ENCODE measurements at regions of chr22 and their contacts with region 1.

Region 1: GRCh38 chr22:42090596-42091454 is at the start of gene NDUFA6:
- DNase-seq: peak; percentile 98
- H3K4me3 ChIP-seq: peak within 1 kb of the TSS; percentile 98
- H3K27ac ChIP-seq: peak within 1 kb of the TSS; percentile 59
- H3K4me1 ChIP-seq: peaks cover 16% of the 10 kb centered on the region; the same call in 1 of the 2 replicates
- H3K27me3 ChIP-seq: no peaks in the 10 kb centered on the region
- CTCF ChIP-seq: peak; percentile 92
- total RNA-seq, gene NDUFA6: 71.5 and 84.9 TPM in 2 replicates

Region 2: GRCh38 chr22:41998361-41999275 is 92.2 kb before region 1 on chr22 and contains the start of gene WBP2NL:
- CTCF ChIA-PET with region 1: no interaction called
- POLR2A ChIA-PET with region 1: interaction called, 31 read pairs
- intact Hi-C with region 1: no loop called
- DNase-seq: peak; percentile 72 to 89
- H3K4me3 ChIP-seq: peak within 1 kb of the TSS; percentile 76
- H3K27ac ChIP-seq: no peak within 1 kb of the TSS
- H3K4me1 ChIP-seq: peaks cover 16% of the 10 kb centered on the region
- H3K27me3 ChIP-seq: peaks cover 3% of the 10 kb centered on the region; the same call in 1 of the 2 replicates
- CTCF ChIP-seq: no peak
- total RNA-seq, gene WBP2NL: 7.1 and 12.2 TPM in 2 replicates

Region 3: DNA sequence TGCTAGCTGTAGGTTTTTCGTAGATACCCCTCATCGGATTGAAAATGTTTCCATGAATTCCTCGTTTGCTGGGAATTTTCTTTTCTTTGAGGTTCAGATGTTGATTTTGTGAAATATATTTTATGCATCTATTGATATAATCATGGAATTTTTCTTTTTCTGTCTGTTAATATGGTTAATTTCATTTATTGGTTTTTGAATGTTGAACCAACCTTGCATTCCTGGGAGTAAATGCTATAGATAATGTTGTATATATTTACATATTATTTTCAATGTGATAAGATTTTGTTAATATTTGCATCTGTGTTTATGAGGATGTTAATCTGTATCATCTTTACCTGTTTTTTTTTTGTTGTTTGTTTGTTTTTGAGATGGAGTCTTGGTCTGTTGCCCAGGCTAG is 10.4 kb after region 1 on chr22:
- CTCF ChIA-PET with region 1: interaction called, 28 read pairs
- POLR2A ChIA-PET with region 1: interaction called, 8 read pairs
- intact Hi-C with region 1: no loop called
- DNase-seq: no peak
- H3K4me3 ChIP-seq: no peak overlapping the region
- H3K27ac ChIP-seq: no peak overlapping the region
- H3K4me1 ChIP-seq: no peaks in the 10 kb centered on the region
- H3K27me3 ChIP-seq: no peaks in the 10 kb centered on the region
- CTCF ChIP-seq: no peak

Region 4: GRCh38 chr22:42160830-42161696 is 70.2 kb after region 1 on chr22:
- CTCF ChIA-PET with region 1: no interaction called
- POLR2A ChIA-PET with region 1: no interaction called
- intact Hi-C with region 1: loop called (anchors 2 kb)
- DNase-seq: no peak
- H3K4me3 ChIP-seq: no peak overlapping the region
- H3K27ac ChIP-seq: no peak overlapping the region
- H3K4me1 ChIP-seq: no peaks in the 10 kb centered on the region
- H3K27me3 ChIP-seq: no peaks in the 10 kb centered on the region
- CTCF ChIP-seq: no peak

Region 5: GRCh38 chr22:42256220-42256619 is 165.4 kb after region 1 on chr22:
- CTCF ChIA-PET with region 1: no interaction called
- POLR2A ChIA-PET with region 1: no interaction called
- intact Hi-C with region 1: no loop called
- DNase-seq: no peak
- H3K4me3 ChIP-seq: no peak overlapping the region
- H3K27ac ChIP-seq: no peak overlapping the region
- H3K4me1 ChIP-seq: no peaks in the 10 kb centered on the region
- H3K27me3 ChIP-seq: no peaks in the 10 kb centered on the region
- CTCF ChIP-seq: no peak

Region 6: DNA sequence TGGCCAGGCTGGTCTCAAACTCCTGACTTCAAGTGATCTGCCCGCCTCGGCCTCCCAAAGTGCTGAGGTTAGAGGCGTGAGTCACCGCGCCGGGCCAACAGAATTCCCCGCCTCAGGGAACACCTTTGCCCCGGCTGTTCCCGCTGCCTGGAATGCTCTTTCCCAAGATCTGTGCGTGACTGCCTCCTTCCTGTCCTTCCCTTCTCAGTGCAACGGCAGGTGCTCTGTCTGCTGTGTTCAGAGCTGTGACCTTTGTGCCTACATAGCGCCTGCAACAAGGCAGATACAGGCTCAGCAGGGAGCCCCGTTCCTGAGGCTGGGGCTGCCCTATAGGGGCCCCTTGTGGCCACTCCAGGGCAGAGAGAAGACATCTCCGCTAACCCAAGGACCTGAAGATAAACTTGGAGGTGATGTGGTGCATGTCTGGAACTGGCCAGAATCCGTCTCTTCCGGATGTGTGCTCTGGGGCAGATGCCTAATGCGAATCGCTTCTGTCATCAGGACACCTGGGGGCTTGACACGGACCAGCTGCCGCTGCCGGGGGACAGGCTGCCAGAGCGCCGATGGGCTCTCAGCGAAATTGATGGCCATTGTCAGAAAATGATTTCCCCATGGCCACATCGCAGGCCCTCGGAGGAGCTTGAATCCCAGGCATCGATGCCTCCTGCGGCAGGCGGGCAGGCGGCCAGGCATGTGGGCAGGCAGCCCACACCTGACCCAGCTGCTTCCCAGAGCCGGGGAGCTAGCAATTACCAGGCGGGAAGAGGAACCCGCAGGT is 223.2 kb after region 1 on chr22:
- CTCF ChIA-PET with region 1: no interaction called
- POLR2A ChIA-PET with region 1: no interaction called
- intact Hi-C with region 1: loop called (anchors 5 kb)
- DNase-seq: peak; percentile 85 to 96
- H3K4me3 ChIP-seq: no peak overlapping the region
- H3K27ac ChIP-seq: peak overlapping the region; percentile 41
- H3K4me1 ChIP-seq: peaks cover 37% of the 10 kb centered on the region
- H3K27me3 ChIP-seq: no peaks in the 10 kb centered on the region
- CTCF ChIP-seq: peak; percentile 87

Region 7: DNA sequence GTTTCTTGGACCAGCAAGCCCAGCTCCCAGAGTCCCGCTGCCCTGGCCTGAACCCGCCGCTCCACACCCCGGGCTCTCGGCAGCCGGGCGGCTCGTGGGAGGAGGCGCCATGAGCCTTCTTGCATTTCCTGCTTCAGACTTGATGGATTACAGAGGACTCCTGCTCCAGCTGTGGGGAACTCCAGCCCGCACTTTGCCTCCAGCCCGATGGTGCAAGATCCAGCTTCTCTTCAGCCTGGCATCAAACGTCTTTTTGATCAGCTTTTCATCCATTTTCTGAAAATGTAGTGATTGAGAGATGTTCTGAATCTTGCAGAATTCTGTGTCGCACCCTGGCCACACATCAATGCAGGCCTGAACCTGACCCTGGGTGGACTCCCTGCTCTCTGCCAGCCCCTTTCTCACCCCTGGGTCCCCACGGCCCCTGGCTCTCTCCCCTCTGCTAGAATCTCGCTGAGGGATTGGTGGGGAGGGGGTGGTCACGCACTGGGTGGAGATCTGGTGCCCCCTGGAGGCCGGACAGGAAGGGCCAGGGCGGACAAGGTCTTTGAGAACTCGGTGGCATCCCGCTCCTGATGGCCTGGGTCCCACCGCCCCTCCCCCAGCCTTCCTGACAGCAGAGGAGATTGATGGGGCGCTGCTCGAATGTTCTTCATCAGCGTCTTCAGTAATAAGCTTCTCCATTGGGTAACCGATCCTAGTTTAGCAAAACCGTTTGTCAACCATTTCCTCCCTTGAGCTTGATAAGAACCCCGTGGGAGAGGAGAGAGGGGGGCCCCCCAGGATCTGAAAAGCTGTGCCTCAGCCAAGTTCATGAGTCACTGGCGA is 353.5 kb after region 1 on chr22:
- CTCF ChIA-PET with region 1: interaction called, 11 read pairs
- POLR2A ChIA-PET with region 1: interaction called, 3 read pairs
- intact Hi-C with region 1: loop called (anchors 2 kb)
- DNase-seq: peak; percentile 72 to 83
- H3K4me3 ChIP-seq: peak overlapping the region; percentile 30; the same call in 1 of the 2 replicates
- H3K27ac ChIP-seq: no peak overlapping the region
- H3K4me1 ChIP-seq: peaks cover 21% of the 10 kb centered on the region; the same call in 1 of the 2 replicates
- H3K27me3 ChIP-seq: 0 out of 2 replicates have a peak, but pooled peaks cover 7% of the 10 kb centered on the region
- CTCF ChIP-seq: peak; percentile 83

Measured in PC-9 (cell line).